ENCODE measurements at regions of chr22 and their contacts with region 1.

Region 1: DNA sequence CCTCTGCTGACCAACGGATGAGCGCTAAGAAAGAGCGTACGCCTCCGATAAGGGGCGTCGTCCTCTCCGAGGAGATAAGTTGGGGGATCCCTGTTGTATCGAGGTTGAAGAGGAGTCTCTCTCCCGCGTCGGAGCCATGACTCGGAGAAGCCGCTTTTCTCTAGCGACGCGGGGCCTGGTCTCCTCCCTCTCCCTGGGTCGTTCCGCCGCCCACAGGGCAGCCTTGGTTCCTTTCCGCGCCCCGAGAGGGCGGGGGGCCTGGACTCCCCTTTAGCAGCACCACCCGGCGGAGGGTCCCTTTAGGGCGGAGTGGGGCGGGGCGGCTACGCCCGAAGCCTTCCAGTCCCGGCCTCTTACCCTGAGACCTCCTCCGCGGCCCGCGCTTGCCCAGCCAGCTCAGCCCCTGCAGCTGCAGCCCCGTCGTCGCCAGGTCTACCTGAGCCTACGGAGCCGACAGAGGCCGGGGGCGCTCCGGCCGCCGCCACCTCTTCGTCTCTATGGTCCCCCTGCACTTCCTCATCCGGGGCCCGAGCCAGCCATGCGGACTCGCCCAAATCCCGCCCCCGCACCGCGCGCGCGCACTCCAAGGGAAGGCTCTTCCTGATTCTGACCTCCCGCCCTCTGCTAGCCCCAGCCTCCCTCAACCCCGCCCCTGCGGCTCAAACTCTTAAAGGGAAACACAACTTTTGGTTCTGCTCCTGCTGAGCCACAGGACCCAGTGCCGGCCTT is at the start of gene PRR14L:
- DNase-seq: peak; percentile 98
- H3K4me3 ChIP-seq: peak within 1 kb of the TSS; percentile 63 to 70
- H3K27ac ChIP-seq: peak within 1 kb of the TSS; percentile 71 to 74
- H3K4me1 ChIP-seq: peaks cover 3% of the 10 kb centered on the region
- H3K27me3 ChIP-seq: no peaks in the 10 kb centered on the region
- CTCF ChIP-seq: peak in 3 of 4 experiments; percentile 8 to 34 (median 12)
- POLR2A ChIP-seq: peak; percentile 81
- total RNA-seq, gene PRR14L: 17.7 to 42.4 TPM

Region 2: GRCh38 chr22:31661851-31662656 is 87.7 kb before region 1 on chr22 and contains the start of gene PISD:
- intact Hi-C with region 1: loop called (anchors 5 kb)
- DNase-seq: peak; percentile 96
- H3K4me3 ChIP-seq: peak within 1 kb of the TSS; percentile 69 to 87
- H3K27ac ChIP-seq: peak within 1 kb of the TSS; percentile 70 to 75
- H3K4me1 ChIP-seq: no peaks in the 10 kb centered on the region
- H3K27me3 ChIP-seq: no peaks in the 10 kb centered on the region
- CTCF ChIP-seq: no peak
- POLR2A ChIP-seq: peak; percentile 86
- total RNA-seq, gene PISD: 35.1 to 91.2 TPM

Region 3: GRCh38 chr22:31680861-31681341 is 68.9 kb before region 1 on chr22:
- intact Hi-C with region 1: loop called (anchors 5 kb)
- DNase-seq: peak; percentile 12
- H3K4me3 ChIP-seq: no peak overlapping the region
- H3K27ac ChIP-seq: peak overlapping the region; percentile 13 to 29
- H3K4me1 ChIP-seq: no peaks in the 10 kb centered on the region
- H3K27me3 ChIP-seq: no peaks in the 10 kb centered on the region
- CTCF ChIP-seq: no peak
- POLR2A ChIP-seq: no peak

Region 4: DNA sequence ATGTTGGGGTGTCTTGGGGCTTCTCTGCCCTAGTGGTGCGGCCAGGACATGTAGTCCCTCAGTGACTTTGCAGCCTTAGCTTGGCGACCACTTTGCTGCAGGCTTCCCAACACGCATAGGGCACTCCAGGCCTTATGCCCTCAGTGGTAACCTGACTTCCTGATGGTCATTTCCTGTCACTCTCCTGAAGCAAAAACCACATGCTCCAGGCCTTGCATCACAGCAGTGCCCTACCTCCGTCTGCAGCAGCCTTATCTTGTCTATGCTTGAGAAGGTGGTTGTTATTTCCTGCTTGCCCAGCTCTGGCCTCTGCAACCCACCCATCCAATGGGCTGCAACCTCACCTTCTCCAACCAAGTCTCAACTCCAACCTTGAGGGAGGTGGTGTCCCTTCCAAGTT is 54.4 kb before region 1 on chr22:
- intact Hi-C with region 1: no loop called
- DNase-seq: no peak
- H3K4me3 ChIP-seq: no peak overlapping the region
- H3K27ac ChIP-seq: no peak overlapping the region
- H3K4me1 ChIP-seq: no peaks in the 10 kb centered on the region
- H3K27me3 ChIP-seq: no peaks in the 10 kb centered on the region
- CTCF ChIP-seq: no peak
- POLR2A ChIP-seq: no peak

Region 5: DNA sequence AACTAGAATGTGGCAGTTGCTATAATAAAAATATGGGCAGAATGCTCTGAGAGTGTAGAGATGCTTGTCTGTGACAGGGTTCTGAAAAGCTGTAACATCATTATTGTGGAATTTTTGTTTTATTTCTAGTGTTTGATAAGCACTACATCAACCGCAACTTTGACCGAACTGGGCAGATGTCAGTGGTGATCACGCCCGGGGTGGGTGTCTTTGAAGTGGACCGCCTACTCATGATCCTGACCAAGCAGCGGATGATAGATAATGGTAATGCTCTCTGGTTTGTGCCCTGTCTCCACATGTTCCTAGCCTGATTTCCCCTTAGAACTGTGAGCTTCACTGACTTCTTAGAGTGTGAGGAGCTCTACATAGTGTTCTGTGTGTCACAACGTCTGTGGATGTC is 52.8 kb after region 1 on chr22:
- intact Hi-C with region 1: no loop called
- DNase-seq: no peak
- H3K4me3 ChIP-seq: no peak overlapping the region
- H3K27ac ChIP-seq: no peak overlapping the region
- H3K4me1 ChIP-seq: no peaks in the 10 kb centered on the region
- H3K27me3 ChIP-seq: no peaks in the 10 kb centered on the region
- CTCF ChIP-seq: no peak
- POLR2A ChIP-seq: no peak

Region 6: GRCh38 chr22:31943976-31944699 is 194.3 kb after region 1 on chr22 and contains the start of gene YWHAH:
- intact Hi-C with region 1: loop called (anchors 2 kb)
- DNase-seq: peak; percentile 94
- H3K4me3 ChIP-seq: peak within 1 kb of the TSS; percentile 92 to 95
- H3K27ac ChIP-seq: peak within 1 kb of the TSS; percentile 94 to 96
- H3K4me1 ChIP-seq: no peaks in the 10 kb centered on the region
- H3K27me3 ChIP-seq: no peaks in the 10 kb centered on the region
- CTCF ChIP-seq: no peak
- POLR2A ChIP-seq: peak; percentile 59
- total RNA-seq, gene YWHAH: 41.9 to 62.4 TPM

Region 7: DNA sequence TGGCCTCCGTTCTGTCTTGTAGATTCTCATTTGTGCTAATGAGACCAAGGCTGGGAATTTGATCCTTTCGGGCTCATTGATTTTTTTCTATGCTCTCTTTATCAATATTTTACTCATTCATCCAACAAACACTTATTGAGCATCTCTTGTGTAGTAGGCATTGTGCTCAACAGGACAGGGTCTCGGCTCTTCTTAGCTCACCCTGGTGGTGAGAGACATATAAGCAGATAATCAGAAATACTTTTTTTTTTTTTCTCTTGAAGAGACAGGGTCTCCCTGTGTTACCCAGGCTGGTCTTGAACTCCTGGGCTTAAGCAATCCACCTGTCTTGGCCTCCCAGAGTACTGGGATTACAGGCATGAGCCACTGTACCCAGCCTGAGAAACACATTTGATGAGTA is 245.2 kb after region 1 on chr22:
- intact Hi-C with region 1: no loop called
- DNase-seq: no peak
- H3K4me3 ChIP-seq: no peak overlapping the region
- H3K27ac ChIP-seq: no peak overlapping the region
- H3K4me1 ChIP-seq: no peaks in the 10 kb centered on the region
- H3K27me3 ChIP-seq: no peaks in the 10 kb centered on the region
- CTCF ChIP-seq: no peak
- POLR2A ChIP-seq: no peak

Measured in prostate gland (tissue), 2 donors.